GM12878 (cell line): ENCODE measurements at regions of chr11 and their contacts with region 1.

Region 1: DNA sequence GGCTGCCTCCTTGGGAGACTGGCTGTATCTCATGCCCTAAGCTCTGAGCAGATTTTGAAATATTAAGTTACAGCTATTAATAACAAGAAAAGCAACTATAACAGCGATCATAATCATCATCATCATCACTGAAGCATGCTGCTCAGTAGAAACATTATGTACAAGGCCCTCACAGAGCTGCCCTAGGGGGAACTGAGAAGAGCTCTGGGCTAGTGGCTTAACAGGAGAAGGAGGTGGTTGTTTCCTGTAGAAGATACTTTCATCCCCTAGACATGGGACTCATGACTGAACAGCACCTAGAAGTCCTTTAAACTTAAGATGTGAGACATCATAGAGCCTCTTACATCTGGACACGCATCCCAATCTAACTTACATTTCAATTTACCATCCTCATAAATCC is 332.8 kb upstream of the PLET1 start:
- DNase-seq: no peak
- ATAC-seq: peak; percentile 55; the same call in 2 of the 3 replicates
- H3K4me3 ChIP-seq: no peak overlapping the region
- H3K27ac ChIP-seq: no peak overlapping the region
- H3K4me1 ChIP-seq: peaks cover 10% of the 10 kb centered on the region
- H3K27me3 ChIP-seq: no peaks in the 10 kb centered on the region; a peak in 1 of 4 replicates
- CTCF ChIP-seq: no peak
- EP300 ChIP-seq: no peak
- POLR2A ChIP-seq: no peak
- RAD21 ChIP-seq: no peak

Region 2: GRCh38 chr11:112364962-112365481 is 228.4 kb before region 1 on chr11:
- CTCF ChIA-PET with region 1: no interaction called
- POLR2A ChIA-PET with region 1: no interaction called
- RAD21 ChIA-PET with region 1: no interaction called
- SMC1A ChIA-PET with region 1: no interaction called
- in situ Hi-C with region 1: no loop called
- intact Hi-C with region 1: no loop called
- DNase-seq: no peak
- ATAC-seq: no peak
- H3K4me3 ChIP-seq: no peak overlapping the region
- H3K27ac ChIP-seq: no peak overlapping the region
- H3K4me1 ChIP-seq: no peaks in the 10 kb centered on the region
- H3K27me3 ChIP-seq: no peaks in the 10 kb centered on the region
- CTCF ChIP-seq: no peak
- EP300 ChIP-seq: no peak
- POLR2A ChIP-seq: no peak
- RAD21 ChIP-seq: no peak

Region 3: DNA sequence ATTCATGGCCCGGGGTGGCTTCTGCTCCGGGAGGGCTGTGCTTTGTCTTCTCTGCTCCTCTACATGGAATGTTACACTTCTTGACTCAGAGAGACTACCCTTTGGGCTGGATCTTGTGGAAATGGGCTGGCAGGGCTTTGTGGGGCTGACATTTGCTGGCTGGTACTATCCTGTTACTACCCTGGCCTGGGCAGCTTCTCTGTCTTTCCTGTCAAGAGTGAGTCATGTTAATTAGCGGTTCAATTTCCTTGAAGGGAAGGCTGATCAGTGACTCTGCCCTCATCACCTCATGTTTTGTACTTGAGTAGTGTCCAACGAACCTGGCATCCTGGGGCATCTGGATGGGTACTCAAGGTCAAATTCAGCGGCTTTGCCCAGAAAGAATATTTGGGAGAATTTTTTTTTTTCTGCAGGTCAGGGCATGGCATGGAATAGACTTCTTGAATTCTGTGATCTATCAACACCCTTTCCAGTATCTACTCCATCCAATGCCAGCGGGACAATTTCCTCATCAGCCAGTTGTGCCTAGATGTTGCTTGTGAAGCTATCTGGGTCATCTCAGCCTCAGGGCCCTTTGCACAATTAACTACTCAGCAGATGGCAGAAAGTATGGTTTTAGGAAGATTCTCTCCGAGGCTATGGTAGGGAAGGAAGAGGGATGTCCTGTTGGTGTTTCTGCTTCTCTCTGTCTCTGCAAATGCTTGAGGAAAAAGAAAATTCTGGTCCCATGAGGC is 192.2 kb before region 1 on chr11:
- CTCF ChIA-PET with region 1: no interaction called
- POLR2A ChIA-PET with region 1: no interaction called
- RAD21 ChIA-PET with region 1: no interaction called
- SMC1A ChIA-PET with region 1: no interaction called
- in situ Hi-C with region 1: no loop called
- intact Hi-C with region 1: no loop called
- DNase-seq: no peak
- ATAC-seq: no peak
- H3K4me3 ChIP-seq: no peak overlapping the region
- H3K27ac ChIP-seq: no peak overlapping the region
- H3K4me1 ChIP-seq: no peaks in the 10 kb centered on the region
- H3K27me3 ChIP-seq: no peaks in the 10 kb centered on the region; a peak in 1 of 4 replicates
- CTCF ChIP-seq: no peak
- EP300 ChIP-seq: no peak
- POLR2A ChIP-seq: no peak
- RAD21 ChIP-seq: no peak

Region 4: DNA sequence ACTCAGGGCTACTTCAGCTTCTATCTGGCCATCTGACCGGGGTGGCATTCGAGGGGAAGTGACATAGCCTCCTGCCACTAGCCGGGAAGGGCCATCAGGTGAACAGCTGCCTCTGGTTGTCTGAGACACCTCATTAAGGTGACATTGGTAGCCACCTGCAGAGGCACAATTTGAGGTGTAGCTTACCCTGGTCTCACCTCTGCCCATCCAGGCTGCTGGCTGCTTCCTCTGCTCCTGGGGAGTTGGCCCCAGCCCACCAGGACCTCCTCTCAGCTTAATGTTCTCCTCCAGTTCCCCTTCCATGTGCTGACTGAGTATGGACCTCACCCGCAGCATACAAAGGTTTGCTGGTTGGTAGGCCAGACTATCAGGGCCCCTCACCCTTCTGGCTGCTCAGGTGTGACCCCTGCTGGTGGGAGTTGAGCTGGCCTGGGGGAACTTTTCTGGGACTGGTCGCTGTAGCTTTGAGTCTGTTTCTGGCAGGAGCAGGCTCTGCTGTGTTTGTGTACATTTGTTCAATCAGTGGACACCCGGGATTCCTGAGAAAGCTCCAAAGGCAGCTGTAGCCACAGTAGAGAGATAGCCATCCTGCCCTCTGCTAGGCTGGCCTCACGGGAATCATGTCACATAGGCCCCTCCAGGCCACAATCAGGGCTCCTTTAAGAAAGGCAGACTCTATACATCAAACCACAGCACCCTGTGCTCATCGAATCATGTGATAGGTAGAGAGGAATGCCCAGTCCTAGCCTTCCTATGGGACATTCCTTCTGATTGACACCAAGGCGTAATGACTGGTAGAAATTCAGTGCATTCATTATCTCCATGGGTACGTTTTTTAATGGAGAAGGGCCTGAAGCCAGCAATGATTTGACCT is 37.7 kb before region 1 on chr11:
- CTCF ChIA-PET with region 1: no interaction called
- POLR2A ChIA-PET with region 1: no interaction called
- RAD21 ChIA-PET with region 1: no interaction called
- SMC1A ChIA-PET with region 1: no interaction called
- in situ Hi-C with region 1: no loop called
- intact Hi-C with region 1: no loop called
- DNase-seq: no peak
- ATAC-seq: peak; percentile 74
- H3K4me3 ChIP-seq: no peak overlapping the region
- H3K27ac ChIP-seq: no peak overlapping the region
- H3K4me1 ChIP-seq: no peaks in the 10 kb centered on the region
- H3K27me3 ChIP-seq: no peaks in the 10 kb centered on the region; a peak in 1 of 4 replicates
- CTCF ChIP-seq: peak; percentile 50 to 82 (median 76)
- EP300 ChIP-seq: no peak
- POLR2A ChIP-seq: no peak
- RAD21 ChIP-seq: peak; percentile 60

Region 5: DNA sequence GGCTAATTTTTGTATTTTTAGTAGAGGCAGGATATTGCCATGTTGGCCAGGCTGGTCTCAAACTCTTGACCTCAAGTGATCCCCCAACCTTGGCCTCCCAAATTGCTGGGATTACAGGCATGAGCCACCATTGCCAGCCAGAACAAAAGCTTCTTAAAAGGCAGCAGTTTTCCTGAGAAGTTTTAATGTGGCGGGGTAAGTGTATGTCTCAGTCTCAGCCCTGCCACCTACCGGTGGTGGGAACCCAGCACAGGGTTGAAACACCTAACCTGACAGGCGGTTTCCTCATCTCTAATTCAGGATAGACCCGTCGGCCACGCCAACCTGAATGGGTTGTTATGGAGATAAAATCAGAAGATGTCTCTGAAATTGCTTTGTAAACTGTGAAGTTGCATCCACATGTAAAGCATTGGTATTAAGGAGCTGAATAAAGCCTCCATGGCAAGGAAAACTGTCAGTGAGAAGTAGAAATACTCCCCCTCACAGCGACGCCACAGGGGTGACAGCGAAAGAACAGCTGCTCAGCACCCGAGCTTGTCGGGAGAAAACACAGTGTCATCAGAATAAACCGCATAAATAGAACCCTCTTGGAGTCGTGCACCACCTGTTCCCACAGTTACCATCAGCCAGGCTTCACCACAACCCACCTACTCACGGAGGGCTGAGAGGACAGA is 201.8 kb after region 1 on chr11:
- CTCF ChIA-PET with region 1: interaction called, 116 read pairs
- POLR2A ChIA-PET with region 1: no interaction called
- RAD21 ChIA-PET with region 1: interaction called, 53 read pairs
- SMC1A ChIA-PET with region 1: interaction called, 77 read pairs
- in situ Hi-C with region 1: loop called (anchors 5 kb)
- intact Hi-C with region 1: loop called (anchors 1 kb)
- DNase-seq: no peak
- ATAC-seq: peak; percentile 94
- H3K4me3 ChIP-seq: no peak overlapping the region
- H3K27ac ChIP-seq: no peak overlapping the region
- H3K4me1 ChIP-seq: 0 out of 2 replicates have a peak, but pooled peaks cover 3% of the 10 kb centered on the region
- H3K27me3 ChIP-seq: no peaks in the 10 kb centered on the region; a peak in 2 of 4 replicates
- CTCF ChIP-seq: peak; percentile 66 to 77 (median 77)
- EP300 ChIP-seq: no peak
- POLR2A ChIP-seq: no peak
- RAD21 ChIP-seq: peak; percentile 64